A673 (cell line): ENCODE measurements at regions of chr12 and their contacts with region 1.

Region 1: DNA sequence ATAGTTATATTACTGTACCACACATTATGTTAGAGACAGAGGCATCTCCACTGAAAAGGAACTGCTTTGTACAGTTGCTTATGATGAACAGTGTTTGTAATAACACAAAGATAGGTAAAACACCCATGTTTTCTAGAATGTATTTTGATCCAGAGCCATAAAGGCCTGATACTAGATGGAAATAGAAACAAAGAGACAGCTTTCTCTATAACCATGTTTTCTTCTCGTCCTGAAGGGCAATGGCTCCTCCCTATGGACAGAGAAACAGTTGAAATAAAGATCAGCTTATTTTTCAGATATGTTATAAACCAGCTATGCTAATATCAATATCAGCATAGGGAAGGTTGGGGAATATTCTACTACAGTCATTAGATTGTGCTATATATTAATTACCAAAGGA is 109.2 kb downstream of the ATXN7L3B start:
- DNase-seq: peak; percentile 80
- H3K4me3 ChIP-seq: no peak overlapping the region
- H3K27ac ChIP-seq: peak overlapping the region; percentile 73
- H3K4me1 ChIP-seq: peaks cover 31% of the 10 kb centered on the region
- H3K27me3 ChIP-seq: no peaks in the 10 kb centered on the region
- CTCF ChIP-seq: peak; percentile 70

Region 2: DNA sequence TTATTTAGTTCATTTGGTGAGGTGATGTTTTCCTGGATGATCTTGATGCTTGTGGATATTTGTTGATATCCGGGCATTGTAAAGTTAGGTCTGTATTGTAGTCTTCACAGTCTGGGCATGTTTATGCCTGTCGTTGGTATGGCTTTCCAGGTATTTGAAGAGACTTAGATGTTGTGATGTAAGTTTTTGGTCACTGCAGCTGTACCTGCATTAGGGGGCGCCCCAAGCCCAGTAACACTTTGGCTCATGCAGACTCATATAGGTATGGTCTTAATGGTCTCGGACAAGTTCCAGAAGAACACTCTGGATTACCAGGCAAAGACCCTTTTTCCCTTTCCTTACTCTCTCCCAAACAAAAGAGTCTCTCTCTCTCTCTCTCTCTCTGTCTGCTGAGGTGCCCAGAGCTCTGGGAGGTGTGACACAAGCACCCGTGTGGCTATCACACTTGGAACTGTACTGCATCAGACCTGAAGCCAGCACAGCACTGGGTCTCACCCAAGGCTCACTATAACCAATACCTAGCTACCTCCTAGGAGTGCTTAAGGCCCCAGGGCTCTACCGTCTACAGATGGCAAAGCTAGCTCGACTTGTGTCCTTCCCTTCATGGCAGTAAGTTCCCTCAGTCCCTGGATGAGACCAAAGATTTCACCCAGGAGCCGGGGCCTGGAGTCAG is 535.0 kb before region 1 on chr12:
- CTCF ChIA-PET with region 1: no interaction called
- POLR2A ChIA-PET with region 1: no interaction called
- intact Hi-C with region 1: loop called (anchors 10 kb)
- DNase-seq: peak; percentile 51
- H3K4me3 ChIP-seq: no peak overlapping the region
- H3K27ac ChIP-seq: no peak overlapping the region
- H3K4me1 ChIP-seq: no peaks in the 10 kb centered on the region
- H3K27me3 ChIP-seq: no peaks in the 10 kb centered on the region
- CTCF ChIP-seq: peak; percentile 63

Region 3: DNA sequence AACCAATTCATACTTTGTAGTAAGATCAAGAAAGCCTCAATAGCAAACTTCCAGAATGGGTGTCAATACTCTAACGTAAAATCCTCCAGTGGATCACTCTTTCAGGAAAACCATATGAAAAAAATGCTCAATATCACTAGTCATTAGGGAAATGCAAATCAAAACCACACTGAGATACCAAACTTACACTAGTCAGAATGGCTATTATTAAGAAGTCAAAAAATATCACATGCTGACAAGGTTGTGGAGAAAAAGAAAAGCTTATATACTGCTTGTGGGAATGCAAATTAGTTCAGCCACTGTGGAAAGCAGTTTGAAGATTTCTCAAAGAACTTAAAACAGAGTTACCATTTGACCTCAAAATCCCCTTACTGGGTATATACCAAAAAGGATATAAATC is 158.7 kb before region 1 on chr12:
- CTCF ChIA-PET with region 1: interaction called, 12 read pairs
- POLR2A ChIA-PET with region 1: no interaction called
- intact Hi-C with region 1: no loop called
- DNase-seq: no peak
- H3K4me3 ChIP-seq: no peak overlapping the region
- H3K27ac ChIP-seq: no peak overlapping the region
- H3K4me1 ChIP-seq: no peaks in the 10 kb centered on the region
- H3K27me3 ChIP-seq: no peaks in the 10 kb centered on the region
- CTCF ChIP-seq: no peak

Region 4: GRCh38 chr12:74537707-74538385 is 109.0 kb before region 1 on chr12 and contains the start of gene ATXN7L3B:
- CTCF ChIA-PET with region 1: no interaction called
- POLR2A ChIA-PET with region 1: no interaction called
- intact Hi-C with region 1: loop called (anchors 5 kb)
- DNase-seq: peak; percentile 98
- H3K4me3 ChIP-seq: peak within 1 kb of the TSS; percentile 88
- H3K27ac ChIP-seq: peak within 1 kb of the TSS; percentile 95
- H3K4me1 ChIP-seq: peaks cover 16% of the 10 kb centered on the region
- H3K27me3 ChIP-seq: no peaks in the 10 kb centered on the region
- CTCF ChIP-seq: no peak
- total RNA-seq, gene ATXN7L3B: 42.2 and 43.7 TPM in 2 replicates

Region 5: DNA sequence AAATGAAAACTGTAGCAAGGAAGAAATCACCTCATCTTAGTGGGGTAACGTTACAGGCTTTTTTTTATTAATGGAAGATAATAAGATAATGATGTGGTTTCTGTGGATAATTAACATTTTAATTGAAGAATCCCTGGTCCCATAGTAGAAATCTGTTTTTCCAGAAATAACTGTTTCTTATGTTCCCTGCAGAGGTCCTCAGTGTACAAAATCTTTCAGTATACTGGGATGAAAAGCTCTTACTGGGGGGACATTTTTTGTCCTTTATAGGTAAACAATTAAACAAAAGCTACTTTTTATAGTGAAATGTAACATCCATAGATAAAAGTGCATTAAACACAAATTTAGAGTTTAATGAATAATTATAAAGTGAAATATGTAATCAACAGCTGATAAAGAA is 203.0 kb after region 1 on chr12:
- CTCF ChIA-PET with region 1: no interaction called
- POLR2A ChIA-PET with region 1: no interaction called
- intact Hi-C with region 1: no loop called
- DNase-seq: no peak
- H3K4me3 ChIP-seq: no peak overlapping the region
- H3K27ac ChIP-seq: no peak overlapping the region
- H3K4me1 ChIP-seq: no peaks in the 10 kb centered on the region
- H3K27me3 ChIP-seq: no peaks in the 10 kb centered on the region
- CTCF ChIP-seq: no peak; the same call in 1 of the 2 replicates

Region 6: GRCh38 chr12:75170528-75171182 is 523.8 kb after region 1 on chr12:
- CTCF ChIA-PET with region 1: no interaction called
- POLR2A ChIA-PET with region 1: no interaction called
- intact Hi-C with region 1: no loop called
- DNase-seq: no peak
- H3K4me3 ChIP-seq: no peak overlapping the region
- H3K27ac ChIP-seq: no peak overlapping the region
- H3K4me1 ChIP-seq: no peaks in the 10 kb centered on the region
- H3K27me3 ChIP-seq: no peaks in the 10 kb centered on the region
- CTCF ChIP-seq: no peak

Region 7: GRCh38 chr12:75480469-75480949 is 833.7 kb after region 1 on chr12 and contains the start of gene GLIPR1:
- CTCF ChIA-PET with region 1: no interaction called
- POLR2A ChIA-PET with region 1: no interaction called
- intact Hi-C with region 1: no loop called
- DNase-seq: peak; percentile 84
- H3K4me3 ChIP-seq: peak within 1 kb of the TSS; percentile 28
- H3K27ac ChIP-seq: peak within 1 kb of the TSS; percentile 65
- H3K4me1 ChIP-seq: peaks cover 27% of the 10 kb centered on the region
- H3K27me3 ChIP-seq: no peaks in the 10 kb centered on the region
- CTCF ChIP-seq: no peak
- total RNA-seq, gene GLIPR1: 11.3 and 19.7 TPM in 2 replicates